Right ventricle myocardium inferior (tissue), 1 donor: ENCODE measurements at regions of chr9 and their contacts with region 1.

Region 1: DNA sequence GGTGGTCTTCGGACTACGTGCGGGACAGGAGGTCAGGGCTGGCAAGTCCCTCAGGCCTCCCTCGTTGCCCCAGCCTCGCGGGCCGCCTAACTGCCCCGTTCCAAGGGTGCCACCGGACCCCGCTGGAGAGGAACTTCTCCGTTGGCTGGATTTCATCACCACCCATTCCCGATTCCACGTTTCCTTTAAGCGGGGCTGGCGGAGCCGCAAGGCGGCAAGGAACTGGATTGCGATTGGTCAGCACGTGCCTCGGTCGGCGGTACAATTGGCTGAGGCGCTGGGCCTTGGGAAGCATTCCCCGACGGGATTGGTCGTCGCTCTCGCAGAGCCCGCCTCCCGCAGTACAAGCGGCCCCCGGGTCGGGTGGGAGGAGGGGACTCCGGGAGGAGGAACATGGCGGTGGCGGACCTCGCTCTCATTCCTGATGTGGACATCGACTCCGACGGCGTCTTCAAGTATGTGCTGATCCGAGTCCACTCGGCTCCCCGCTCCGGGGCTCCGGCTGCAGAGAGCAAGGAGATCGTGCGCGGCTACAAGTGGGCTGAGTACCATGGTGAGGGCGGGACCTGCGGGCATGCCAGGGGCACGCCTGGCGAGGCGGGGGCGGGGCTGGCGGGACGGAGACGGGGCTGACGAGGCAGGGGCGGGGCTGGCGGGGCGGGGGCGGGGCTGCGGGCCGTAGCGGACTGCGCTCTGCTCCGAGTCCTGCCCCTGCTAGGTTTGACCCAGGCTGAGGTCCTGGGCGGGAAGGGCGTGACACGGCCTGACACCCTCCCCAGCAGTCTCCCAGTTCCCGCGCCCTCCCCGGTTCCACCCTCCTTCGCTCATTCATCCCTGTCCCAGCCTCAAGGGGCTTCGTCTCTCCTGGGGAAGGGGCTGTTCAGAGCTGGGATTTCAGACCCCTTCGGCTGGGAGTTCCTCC is at the start of gene PHPT1:
- DNase-seq: peak; percentile 99
- ATAC-seq: peak; percentile 87
- total RNA-seq, gene PHPT1: 358 TPM

Region 2: DNA sequence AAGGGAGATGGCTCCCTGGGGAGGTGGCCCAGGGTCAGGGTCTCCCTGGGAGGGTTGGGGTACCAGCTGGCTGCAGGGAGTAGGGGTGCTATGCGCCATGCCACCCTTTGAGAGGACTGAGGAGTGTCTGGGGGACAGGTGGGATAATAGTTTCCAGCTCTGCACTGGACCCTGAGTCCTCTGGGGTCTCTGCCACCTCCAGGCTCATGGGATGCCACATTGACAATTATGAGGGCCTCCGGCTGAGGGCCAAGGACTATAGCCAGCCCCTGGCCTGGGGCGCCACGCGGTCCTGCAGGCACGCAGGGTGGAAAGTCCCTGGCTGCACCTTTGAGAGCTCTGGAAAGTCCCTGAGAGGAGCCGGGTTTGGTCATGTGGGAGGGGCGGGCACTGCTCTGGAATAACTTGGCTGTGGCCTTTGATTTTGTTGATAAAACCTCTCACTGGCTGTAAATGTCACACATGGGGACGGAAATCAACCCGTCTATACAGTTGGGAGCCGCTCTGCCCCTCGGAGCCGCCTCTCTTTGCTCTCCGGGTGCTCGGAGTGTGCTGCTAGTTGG is 53.0 kb after region 1 on chr9:
- intact Hi-C with region 1: loop called (anchors 5 kb)
- DNase-seq: no peak
- ATAC-seq: peak; percentile 89

Region 3: GRCh38 chr9:136978073-136978864 is 129.0 kb after region 1 on chr9:
- intact Hi-C with region 1: loop called (anchors 1 kb)
- DNase-seq: peak; percentile 91
- ATAC-seq: peak; percentile 53

Region 4: GRCh38 chr9:137114610-137115391 is 265.5 kb after region 1 on chr9 and contains the start of gene DPP7:
- intact Hi-C with region 1: no loop called
- DNase-seq: peak; percentile 92
- ATAC-seq: peak; percentile 86
- total RNA-seq, gene DPP7: 143 TPM